ENCODE measurements at regions of chr1 and their contacts with region 1.

Region 1: GRCh38 chr1:205791568-205792180 is 16.4 kb upstream of the RAB29 start:
- DNase-seq: no peak
- ATAC-seq: peak; percentile 98
- H3K4me3 ChIP-seq: no peak overlapping the region
- H3K27ac ChIP-seq: no peak overlapping the region
- H3K4me1 ChIP-seq: peaks cover 7% of the 10 kb centered on the region
- H3K27me3 ChIP-seq: no peaks in the 10 kb centered on the region; a peak in 1 of 4 replicates
- CTCF ChIP-seq: peak; percentile 87 to 94 (median 91); a peak in 5 of 6 replicates
- EP300 ChIP-seq: no peak
- POLR2A ChIP-seq: no peak
- RAD21 ChIP-seq: peak; percentile 78

Region 2: GRCh38 chr1:205600085-205600484 is 191.6 kb before region 1 on chr1:
- CTCF ChIA-PET with region 1: no interaction called
- POLR2A ChIA-PET with region 1: no interaction called
- RAD21 ChIA-PET with region 1: no interaction called
- SMC1A ChIA-PET with region 1: no interaction called
- in situ Hi-C with region 1: no loop called
- intact Hi-C with region 1: no loop called
- DNase-seq: no peak
- ATAC-seq: peak; percentile 88
- H3K4me3 ChIP-seq: peak overlapping the region; percentile 36; the same call in 1 of the 2 replicates
- H3K27ac ChIP-seq: peak overlapping the region; percentile 54
- H3K4me1 ChIP-seq: peaks cover 34% of the 10 kb centered on the region
- H3K27me3 ChIP-seq: no peaks in the 10 kb centered on the region
- CTCF ChIP-seq: peak; percentile 18 to 29 (median 21); a peak in 4 of 6 replicates
- EP300 ChIP-seq: no peak
- POLR2A ChIP-seq: no peak
- RAD21 ChIP-seq: no peak

Region 3: DNA sequence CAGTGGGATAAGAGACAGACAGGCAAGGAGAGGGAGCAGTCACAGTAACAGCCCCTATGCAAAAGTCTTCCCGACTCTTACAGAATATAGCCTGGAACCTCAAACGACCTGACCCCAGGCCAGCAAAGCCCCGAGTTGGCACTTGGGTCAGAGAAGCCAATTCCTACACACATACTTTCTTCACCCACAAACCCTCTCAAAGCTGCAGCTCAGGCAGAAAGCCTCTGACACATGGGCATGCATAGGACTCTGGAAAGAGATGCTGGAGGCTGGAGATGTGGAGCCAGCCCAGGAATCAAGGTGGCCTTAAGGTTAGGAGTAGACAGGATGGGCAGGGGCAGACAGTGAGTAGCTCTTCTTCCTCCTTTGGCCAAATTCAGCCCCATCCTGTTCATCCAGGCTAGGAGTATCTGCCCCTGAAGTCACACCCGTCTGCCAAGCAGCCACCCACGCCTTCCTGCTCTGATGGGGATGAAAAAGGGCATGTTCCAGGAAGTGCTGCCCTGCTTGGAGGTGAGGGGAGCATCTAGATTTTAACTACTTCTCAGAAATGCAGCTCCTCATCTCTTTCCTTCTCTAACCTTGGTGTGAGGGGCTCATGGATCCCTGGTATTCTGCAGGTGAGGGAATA is 13.5 kb after region 1 on chr1:
- CTCF ChIA-PET with region 1: interaction called, 13 read pairs
- POLR2A ChIA-PET with region 1: no interaction called
- RAD21 ChIA-PET with region 1: no interaction called
- SMC1A ChIA-PET with region 1: interaction called, 5 read pairs
- in situ Hi-C with region 1: no loop called
- intact Hi-C with region 1: no loop called
- DNase-seq: no peak
- ATAC-seq: peak; percentile 54
- H3K4me3 ChIP-seq: no peak overlapping the region
- H3K27ac ChIP-seq: no peak overlapping the region
- H3K4me1 ChIP-seq: no peaks in the 10 kb centered on the region; the same call in 1 of the 2 replicates
- H3K27me3 ChIP-seq: no peaks in the 10 kb centered on the region
- CTCF ChIP-seq: no peak
- EP300 ChIP-seq: no peak
- POLR2A ChIP-seq: no peak
- RAD21 ChIP-seq: no peak

Region 4: GRCh38 chr1:205827623-205828022 is 35.9 kb after region 1 on chr1:
- CTCF ChIA-PET with region 1: interaction called, 17 read pairs
- POLR2A ChIA-PET with region 1: no interaction called
- RAD21 ChIA-PET with region 1: no interaction called
- SMC1A ChIA-PET with region 1: interaction called, 7 read pairs
- in situ Hi-C with region 1: no loop called
- intact Hi-C with region 1: no loop called
- DNase-seq: no peak
- ATAC-seq: no peak
- H3K4me3 ChIP-seq: no peak overlapping the region
- H3K27ac ChIP-seq: no peak overlapping the region
- H3K4me1 ChIP-seq: no peaks in the 10 kb centered on the region; the same call in 1 of the 2 replicates
- H3K27me3 ChIP-seq: peaks cover 0 to 6% of the 10 kb centered on the region in 2 experiments; a peak in 3 of 4 replicates
- CTCF ChIP-seq: no peak
- EP300 ChIP-seq: no peak
- POLR2A ChIP-seq: no peak
- RAD21 ChIP-seq: no peak

Region 5: DNA sequence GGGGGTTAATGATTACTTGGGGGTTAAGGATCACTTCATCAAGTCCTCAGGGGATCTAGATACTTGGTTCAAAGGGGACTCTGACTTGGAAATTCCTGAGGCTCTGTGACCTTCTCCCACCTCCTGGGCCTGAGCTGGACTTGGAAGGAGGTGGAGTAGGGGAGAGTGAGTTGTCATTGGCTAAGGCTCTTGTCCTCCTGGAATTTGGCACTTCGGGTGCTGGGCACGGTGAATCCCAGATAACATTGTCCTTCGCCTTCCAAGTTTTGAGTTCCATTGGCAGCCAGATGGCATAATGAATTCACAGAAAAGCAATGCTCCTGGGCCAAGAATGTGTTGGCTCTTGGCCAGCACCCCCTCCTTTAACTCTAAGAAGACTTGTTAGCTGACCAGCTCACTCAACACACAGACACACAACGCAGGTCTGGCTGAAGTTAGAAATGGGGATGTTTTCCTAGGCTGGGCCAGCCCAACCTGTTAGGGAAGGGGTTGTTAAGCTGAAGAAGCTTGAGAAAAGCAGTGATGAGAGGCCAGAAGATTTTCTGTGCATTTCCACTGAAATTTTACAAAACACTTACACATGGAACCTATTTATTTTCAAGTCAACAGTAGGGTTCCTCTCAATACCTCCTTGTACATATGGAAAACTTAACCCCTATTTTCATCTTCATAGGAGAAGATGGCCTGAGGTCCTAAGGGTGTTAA is 121.9 kb after region 1 on chr1:
- CTCF ChIA-PET with region 1: interaction called, 53 read pairs
- POLR2A ChIA-PET with region 1: no interaction called
- RAD21 ChIA-PET with region 1: interaction called, 31 read pairs
- SMC1A ChIA-PET with region 1: interaction called, 46 read pairs
- in situ Hi-C with region 1: loop called (anchors 5 kb)
- intact Hi-C with region 1: loop called (anchors 2 kb)
- DNase-seq: no peak
- ATAC-seq: no peak
- H3K4me3 ChIP-seq: no peak overlapping the region
- H3K27ac ChIP-seq: no peak overlapping the region
- H3K4me1 ChIP-seq: no peaks in the 10 kb centered on the region; the same call in 1 of the 2 replicates
- H3K27me3 ChIP-seq: peaks cover 0 to 2% of the 10 kb centered on the region in 2 experiments; a peak in 1 of 4 replicates
- CTCF ChIP-seq: no peak
- EP300 ChIP-seq: no peak
- POLR2A ChIP-seq: no peak
- RAD21 ChIP-seq: no peak

Region 6: GRCh38 chr1:205983925-205984725 is 192.5 kb after region 1 on chr1:
- CTCF ChIA-PET with region 1: interaction called, 222 read pairs
- POLR2A ChIA-PET with region 1: no interaction called
- RAD21 ChIA-PET with region 1: interaction called, 121 read pairs
- SMC1A ChIA-PET with region 1: interaction called, 104 read pairs
- in situ Hi-C with region 1: loop called (anchors 5 kb)
- intact Hi-C with region 1: no loop called
- DNase-seq: no peak
- ATAC-seq: peak; percentile 98
- H3K4me3 ChIP-seq: no peak overlapping the region
- H3K27ac ChIP-seq: no peak overlapping the region
- H3K4me1 ChIP-seq: no peaks in the 10 kb centered on the region
- H3K27me3 ChIP-seq: no peaks in the 10 kb centered on the region; a peak in 2 of 4 replicates
- CTCF ChIP-seq: peak; percentile 85 to 90 (median 88)
- EP300 ChIP-seq: no peak
- POLR2A ChIP-seq: no peak
- RAD21 ChIP-seq: peak; percentile 90

Measured in GM12878 (cell line).